Activated B cell treated with CpG ODN at 0.5 μM for 24 hours (primary cell): ENCODE measurements at regions of chr6 and their contacts with region 1.

Region 1: DNA sequence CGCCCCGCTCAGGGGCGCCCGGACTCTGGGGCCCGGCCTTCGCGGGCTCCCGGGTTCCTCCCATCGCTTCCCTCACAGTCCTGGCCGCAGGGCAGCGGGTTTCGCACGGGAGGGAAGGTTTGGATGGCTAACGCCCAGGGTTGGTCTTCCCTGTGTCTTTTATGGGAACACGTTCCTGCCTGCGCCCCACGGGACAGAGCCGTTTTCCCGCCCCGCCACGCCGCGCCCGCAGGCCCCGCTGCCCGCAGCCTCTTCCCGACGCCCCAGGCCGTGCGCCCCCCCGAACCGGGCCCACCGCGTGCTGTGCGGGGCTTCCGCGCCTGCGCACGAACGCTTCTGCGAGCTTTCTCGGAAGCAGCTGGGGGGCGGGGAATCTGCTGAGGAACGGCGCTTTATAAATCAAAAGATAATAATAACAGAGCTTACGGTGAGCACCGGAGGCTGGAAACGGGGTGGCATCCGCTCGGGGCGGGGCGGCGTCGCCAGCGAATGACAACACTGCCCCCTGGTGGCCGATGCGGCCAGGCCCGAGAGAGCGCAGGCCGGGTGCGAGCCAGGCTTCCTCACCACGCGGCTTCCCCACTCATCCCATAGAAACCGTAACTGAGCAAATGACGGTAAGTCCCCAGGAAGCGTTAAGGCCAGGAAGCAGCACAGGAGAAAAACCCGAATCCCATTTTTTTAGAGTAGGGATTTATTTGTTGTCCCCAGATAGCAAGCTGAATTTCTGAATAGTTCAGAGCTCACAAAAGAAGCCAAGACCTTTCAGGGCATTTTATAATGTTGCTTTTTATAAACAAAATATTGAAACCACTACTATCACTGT is 116.4 kb downstream of the MYLK4 start:
- DNase-seq: peak; percentile 82
- ATAC-seq: peak; percentile 97
- H3K4me3 Mint-ChIP-seq: peak overlapping the region; percentile 79
- H3K27ac Mint-ChIP-seq: no peak overlapping the region
- H3K4me1 Mint-ChIP-seq: peaks cover 3% of the 10 kb centered on the region
- H3K27me3 Mint-ChIP-seq: peaks cover 2% of the 10 kb centered on the region
- CTCF ChIP-seq: no peak

Region 2: DNA sequence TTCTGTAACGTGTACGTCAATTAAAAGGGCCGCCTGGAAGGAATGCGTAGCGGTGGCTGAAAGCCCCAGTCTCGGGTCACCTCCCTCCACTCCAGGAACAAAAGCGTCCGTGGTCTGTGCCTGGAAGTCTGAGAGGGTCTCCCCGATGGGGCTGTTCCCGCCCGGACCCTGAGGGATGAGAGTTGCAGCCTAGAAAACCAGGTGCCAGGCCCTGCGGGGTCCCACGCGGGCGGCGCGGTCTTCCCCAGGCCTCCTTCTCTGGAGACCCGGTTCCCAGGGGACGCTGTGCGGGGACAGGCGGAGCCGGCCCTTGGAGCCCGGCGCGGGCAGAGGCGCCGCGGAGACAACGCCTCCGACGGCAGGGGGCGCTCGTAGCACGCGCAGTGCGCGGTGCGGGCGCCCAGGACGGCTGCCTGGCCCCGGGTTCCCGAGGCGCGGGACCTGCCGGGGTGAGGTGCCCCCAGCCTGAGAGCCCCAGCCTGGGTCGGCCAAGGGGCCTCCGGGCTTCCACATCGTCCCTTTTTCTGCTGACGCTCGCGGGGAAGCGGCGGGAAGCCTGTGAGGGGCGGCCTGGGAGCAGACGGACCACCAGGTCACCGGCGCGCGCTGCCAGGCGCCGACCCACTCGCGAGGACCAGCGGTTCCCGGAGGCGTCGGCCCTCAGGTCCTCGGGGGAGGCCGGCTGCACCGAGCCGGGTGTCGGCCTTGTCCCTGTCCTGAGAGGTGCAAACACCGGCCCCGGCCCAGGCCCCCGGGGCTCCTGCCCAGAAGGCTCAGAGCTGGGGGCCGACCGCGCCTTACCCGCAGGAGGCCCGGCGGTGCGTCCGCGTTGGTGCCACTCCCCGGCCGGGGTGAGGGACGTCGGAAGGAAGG is 1030.0 kb before region 1 on chr6:
- CTCF ChIA-PET with region 1: interaction called, 91 read pairs
- POLR2A ChIA-PET with region 1: interaction called, 5 read pairs
- intact Hi-C with region 1: loop called (anchors 2 kb)
- DNase-seq: peak; percentile 80
- ATAC-seq: peak; percentile 76
- H3K4me3 Mint-ChIP-seq: no peak overlapping the region
- H3K27ac Mint-ChIP-seq: no peak overlapping the region
- H3K4me1 Mint-ChIP-seq: peaks cover 34% of the 10 kb centered on the region
- H3K27me3 Mint-ChIP-seq: peaks cover 73% of the 10 kb centered on the region
- CTCF ChIP-seq: no peak

Region 3: DNA sequence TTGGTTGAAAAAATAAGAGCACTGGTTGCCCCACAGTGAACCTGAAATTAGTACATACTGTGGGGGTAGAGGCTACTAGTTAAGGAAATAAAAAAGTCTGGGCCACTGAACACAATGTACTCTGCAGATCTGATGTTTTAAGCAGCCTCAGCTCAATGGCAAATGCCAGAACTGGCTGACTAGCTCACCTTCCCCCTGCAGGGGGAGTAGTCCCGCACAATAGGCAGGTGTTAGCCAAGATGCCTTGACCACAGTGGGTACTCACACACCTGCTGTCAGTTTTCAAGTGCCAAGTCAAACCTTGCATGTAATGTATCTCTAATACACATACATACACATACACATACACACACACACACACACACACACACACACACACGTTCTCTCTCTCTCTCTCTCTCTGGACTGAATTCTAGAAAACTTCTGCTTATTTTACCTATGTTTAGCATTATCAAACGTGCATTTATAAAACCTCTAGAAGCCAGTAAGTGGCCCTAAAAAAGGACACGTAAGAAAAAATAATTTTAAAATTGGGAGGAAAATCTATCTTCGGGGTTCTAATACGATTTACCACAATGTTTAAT is 425.0 kb before region 1 on chr6:
- CTCF ChIA-PET with region 1: interaction called, 17 read pairs
- POLR2A ChIA-PET with region 1: no interaction called
- intact Hi-C with region 1: no loop called
- DNase-seq: no peak
- ATAC-seq: peak; percentile 67
- H3K4me3 Mint-ChIP-seq: no peak overlapping the region
- H3K27ac Mint-ChIP-seq: no peak overlapping the region
- H3K4me1 Mint-ChIP-seq: no peaks in the 10 kb centered on the region
- H3K27me3 Mint-ChIP-seq: no peaks in the 10 kb centered on the region
- CTCF ChIP-seq: no peak

Region 4: DNA sequence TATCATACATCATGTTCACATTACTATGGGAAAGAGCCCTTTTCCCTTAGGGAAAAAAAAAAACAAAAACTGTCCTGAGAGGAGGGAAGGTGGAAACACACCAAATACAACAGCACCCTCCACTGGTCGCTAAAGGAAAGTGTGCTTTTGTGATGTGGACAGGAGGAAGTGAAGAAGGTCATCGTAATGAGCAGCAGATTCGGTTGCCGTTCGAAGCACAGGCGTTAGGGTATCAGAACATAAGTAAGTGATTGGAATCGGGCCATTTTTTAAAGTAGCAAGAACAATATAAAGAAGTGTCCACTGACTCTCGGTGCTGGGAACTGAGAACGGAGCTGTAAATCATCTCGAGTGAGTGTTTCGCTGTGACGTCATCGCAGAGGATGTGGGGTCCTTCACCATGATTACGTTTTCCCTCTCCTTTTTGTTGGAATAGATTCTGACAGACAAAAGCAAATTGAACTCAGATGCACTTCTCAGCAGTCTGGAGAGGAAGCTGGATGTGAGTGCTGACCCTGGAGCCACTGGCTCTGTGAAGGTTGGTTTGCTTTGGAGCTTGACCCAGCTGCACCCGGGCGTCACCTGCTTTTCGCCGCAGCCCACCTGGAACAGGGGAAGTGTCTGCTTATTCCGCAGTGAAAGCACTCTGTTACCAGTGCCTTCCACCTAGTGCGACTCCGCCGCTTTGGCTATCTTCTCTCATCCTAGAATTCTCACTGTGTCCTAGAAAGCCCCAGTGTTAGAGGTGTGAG is 185.4 kb before region 1 on chr6:
- CTCF ChIA-PET with region 1: no interaction called
- POLR2A ChIA-PET with region 1: no interaction called
- intact Hi-C with region 1: loop called (anchors 1 kb)
- DNase-seq: no peak
- ATAC-seq: no peak
- H3K4me3 Mint-ChIP-seq: peak overlapping the region; percentile 67
- H3K27ac Mint-ChIP-seq: no peak overlapping the region
- H3K4me1 Mint-ChIP-seq: peaks cover 8% of the 10 kb centered on the region
- H3K27me3 Mint-ChIP-seq: no peaks in the 10 kb centered on the region
- CTCF ChIP-seq: no peak

Region 5: GRCh38 chr6:2563635-2564034 is 70.7 kb before region 1 on chr6:
- CTCF ChIA-PET with region 1: no interaction called
- POLR2A ChIA-PET with region 1: no interaction called
- intact Hi-C with region 1: no loop called
- DNase-seq: no peak
- ATAC-seq: no peak
- H3K4me3 Mint-ChIP-seq: no peak overlapping the region
- H3K27ac Mint-ChIP-seq: no peak overlapping the region
- H3K4me1 Mint-ChIP-seq: peaks cover 3% of the 10 kb centered on the region
- H3K27me3 Mint-ChIP-seq: peaks cover 8% of the 10 kb centered on the region
- CTCF ChIP-seq: no peak

Region 6: DNA sequence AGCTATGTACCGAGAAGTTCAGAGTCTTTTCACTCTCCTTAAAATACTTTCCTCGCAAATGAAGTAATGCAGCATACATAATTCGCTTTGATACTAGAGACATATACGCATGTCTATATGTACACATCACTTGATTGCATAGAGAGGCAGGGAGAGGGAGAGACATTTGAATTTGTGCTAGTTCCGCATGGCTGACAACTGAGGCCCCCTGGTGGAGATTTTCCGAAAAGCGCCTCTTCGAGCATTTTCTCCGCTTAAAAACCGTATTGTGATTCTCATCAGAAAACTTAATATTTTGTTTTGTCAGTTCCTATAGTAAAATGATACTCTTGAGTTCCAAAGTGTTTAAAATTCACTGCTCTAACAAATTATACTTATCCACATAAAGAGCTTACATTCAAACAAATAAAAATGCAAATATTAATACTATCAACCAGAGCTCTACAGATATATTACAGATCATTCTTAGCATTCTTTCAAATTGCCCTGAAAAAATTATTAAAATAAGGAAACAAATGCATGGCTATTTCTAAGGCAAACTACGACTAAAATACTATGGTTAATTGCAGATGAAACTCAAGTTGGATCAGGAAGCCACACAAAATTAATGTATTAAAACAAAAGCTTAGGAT is 115.7 kb after region 1 on chr6:
- CTCF ChIA-PET with region 1: interaction called, 5 read pairs
- POLR2A ChIA-PET with region 1: no interaction called
- intact Hi-C with region 1: loop called (anchors 10 kb)
- DNase-seq: peak; percentile 53
- ATAC-seq: peak; percentile 76
- H3K4me3 Mint-ChIP-seq: no peak overlapping the region
- H3K27ac Mint-ChIP-seq: no peak overlapping the region
- H3K4me1 Mint-ChIP-seq: peaks cover 13% of the 10 kb centered on the region
- H3K27me3 Mint-ChIP-seq: peaks cover 14% of the 10 kb centered on the region
- CTCF ChIP-seq: peak; percentile 79